ENCODE measurements at regions of chr14 and their contacts with region 1.

Region 1: DNA sequence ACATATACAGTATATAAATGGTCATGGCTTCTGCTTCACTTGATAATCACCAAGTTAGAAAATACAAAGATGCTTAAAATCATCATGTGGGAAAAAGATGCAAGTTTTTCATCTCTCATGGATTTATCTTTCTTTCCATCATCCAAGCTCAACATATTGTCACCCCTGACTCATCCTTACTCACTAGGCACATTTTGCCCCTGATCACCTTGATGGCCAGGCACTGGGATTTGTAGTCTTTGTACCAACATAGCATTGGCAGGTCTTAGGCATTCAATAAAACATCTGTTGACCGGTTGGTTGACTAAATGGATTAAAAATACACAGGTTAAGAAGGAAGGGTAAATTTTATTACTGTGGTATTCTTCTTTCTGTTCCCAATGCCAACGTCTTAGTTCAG is 28.1 kb downstream of the KLHDC2 start:
- DNase-seq: no peak
- ATAC-seq: no peak
- H3K4me3 ChIP-seq: no peak overlapping the region
- H3K27ac ChIP-seq: no peak overlapping the region
- H3K4me1 ChIP-seq: peaks cover 0 to 11% (median 0%) of the 10 kb centered on the region in 9 donors
- H3K27me3 ChIP-seq: no peaks in the 10 kb centered on the region
- CTCF ChIP-seq: no peak

Region 2: GRCh38 chr14:49727171-49727570 is 68.9 kb before region 1 on chr14:
- intact Hi-C with region 1: no loop called
- DNase-seq: no peak
- ATAC-seq: no peak
- H3K4me3 ChIP-seq: no peak overlapping the region
- H3K27ac ChIP-seq: no peak overlapping the region
- H3K4me1 ChIP-seq: no peaks in the 10 kb centered on the region
- H3K27me3 ChIP-seq: no peaks in the 10 kb centered on the region
- CTCF ChIP-seq: no peak

Region 3: GRCh38 chr14:49852301-49853157 is 56.5 kb after region 1 on chr14 and contains the start of gene NEMF:
- intact Hi-C with region 1: loop called in 2 of 10 experiments (anchors 5 to 10 kb)
- DNase-seq: peak; percentile 91
- ATAC-seq: peak; percentile 89 to 96 (median 92)
- H3K4me3 ChIP-seq: peak within 1 kb of the TSS; percentile 45 to 93 (median 86)
- H3K27ac ChIP-seq: peak within 1 kb of the TSS; percentile 49 to 97 (median 91)
- H3K4me1 ChIP-seq: peaks cover 0 to 37% (median 31%) of the 10 kb centered on the region in 9 donors
- H3K27me3 ChIP-seq: no peaks in the 10 kb centered on the region
- CTCF ChIP-seq: peak; percentile 26 to 96 (median 82)
- total RNA-seq, gene NEMF: 45.0 to 67.4 (median 55.5) TPM